Panc1 (cell line): ENCODE measurements at regions of chr12 and their contacts with region 1.

Region 1: DNA sequence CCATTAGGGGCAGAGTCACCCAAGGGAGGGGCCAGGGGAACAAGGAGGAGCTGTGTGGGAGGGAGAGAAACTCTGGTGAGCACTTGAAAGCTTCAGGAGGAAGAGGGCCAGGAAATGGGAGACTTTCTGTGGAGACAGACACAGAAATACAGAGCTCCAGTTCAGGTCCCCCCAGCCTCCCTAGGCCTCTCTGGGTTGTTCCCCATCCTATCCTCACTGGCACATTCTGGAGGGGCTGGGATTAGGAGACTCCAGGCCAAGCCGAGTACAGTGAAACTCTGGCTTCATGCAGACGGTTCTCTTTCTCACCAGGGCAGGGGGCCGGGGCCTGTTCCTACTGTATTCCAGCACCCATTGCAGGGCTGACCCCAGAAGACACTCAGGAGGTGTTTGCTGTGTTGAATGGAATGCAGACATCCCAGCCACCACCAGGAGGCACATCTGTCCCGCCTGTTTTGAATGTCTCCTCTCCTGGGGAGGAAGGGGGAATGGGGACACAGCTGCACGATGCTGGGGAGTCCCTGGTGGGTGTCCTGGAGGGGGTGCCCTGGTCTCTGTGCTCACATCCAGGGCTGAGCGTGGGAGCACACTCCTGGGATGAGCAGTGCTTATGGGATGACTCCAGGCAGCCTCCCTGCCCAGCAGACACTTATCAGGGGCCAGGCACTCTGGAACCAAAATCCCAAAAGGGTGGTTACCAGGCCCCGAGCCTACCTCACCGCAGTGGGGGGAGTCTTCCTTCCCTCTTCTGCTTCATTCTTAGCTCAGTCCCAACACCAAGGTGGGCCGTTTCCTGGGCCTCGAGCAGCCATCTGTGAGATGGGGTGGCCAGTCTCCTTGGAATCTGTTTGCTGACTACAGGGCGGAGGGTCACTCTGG is 5.5 kb upstream of the KRT84 start:
- DNase-seq: no peak
- ATAC-seq: peak; percentile 80
- H3K4me3 ChIP-seq: no peak overlapping the region
- H3K27ac ChIP-seq: no peak overlapping the region
- H3K4me1 ChIP-seq: no peaks in the 10 kb centered on the region
- H3K27me3 ChIP-seq: peaks cover 11% of the 10 kb centered on the region
- CTCF ChIP-seq: peak; percentile 84

Region 2: DNA sequence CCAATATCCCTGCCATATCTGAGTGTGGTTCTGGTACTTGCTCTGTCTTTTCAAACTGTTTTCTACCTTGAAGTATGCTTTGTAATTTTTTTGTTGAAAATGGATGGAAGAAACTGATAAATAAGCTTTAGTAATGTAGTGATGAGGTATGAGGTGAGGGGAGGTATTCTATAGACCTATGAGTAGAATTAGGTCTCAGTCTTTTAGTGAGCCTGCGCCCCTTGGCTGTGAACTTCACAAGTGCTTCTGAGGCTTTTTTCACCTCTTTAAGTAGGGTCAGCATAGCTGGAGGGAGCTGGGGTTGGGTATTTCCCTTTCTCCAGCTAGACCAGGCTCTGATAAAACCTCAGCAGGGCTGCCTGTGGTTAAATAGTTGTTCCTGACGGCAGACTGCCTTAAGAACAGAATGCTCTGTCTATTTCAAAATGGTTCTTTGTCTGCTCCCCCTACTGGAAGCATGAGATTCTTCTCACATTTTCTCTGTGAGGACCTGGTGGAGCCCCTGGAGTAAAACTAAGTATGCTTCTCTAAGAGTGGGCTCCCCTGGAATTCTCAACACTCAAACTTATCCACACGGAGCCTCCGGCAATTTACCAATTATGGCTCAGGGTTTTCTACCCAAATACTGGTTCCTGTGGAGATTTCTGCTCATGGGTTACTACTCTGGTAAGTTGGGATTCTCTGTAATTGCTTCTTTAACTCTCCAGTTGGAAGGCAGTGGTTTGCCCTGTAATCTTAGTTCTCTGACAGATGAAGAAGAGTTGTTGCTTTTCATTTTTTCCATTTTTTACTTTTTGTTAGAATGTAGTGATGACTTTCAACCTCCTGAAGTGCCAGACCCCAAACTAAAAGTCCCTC is 116.1 kb after region 1 on chr12:
- CTCF ChIA-PET with region 1: no interaction called
- POLR2A ChIA-PET with region 1: no interaction called
- in situ Hi-C with region 1: no loop called
- intact Hi-C with region 1: loop called (anchors 5 kb)
- DNase-seq: peak; percentile 20
- ATAC-seq: peak; percentile 85
- H3K4me3 ChIP-seq: no peak overlapping the region
- H3K27ac ChIP-seq: no peak overlapping the region
- H3K4me1 ChIP-seq: no peaks in the 10 kb centered on the region
- H3K27me3 ChIP-seq: peaks cover 8% of the 10 kb centered on the region
- CTCF ChIP-seq: peak; percentile 79

Region 3: GRCh38 chr12:52615208-52615868 is 224.4 kb after region 1 on chr12:
- CTCF ChIA-PET with region 1: no interaction called
- POLR2A ChIA-PET with region 1: no interaction called
- in situ Hi-C with region 1: no loop called
- intact Hi-C with region 1: no loop called
- DNase-seq: no peak
- ATAC-seq: no peak
- H3K4me3 ChIP-seq: no peak overlapping the region
- H3K27ac ChIP-seq: no peak overlapping the region
- H3K4me1 ChIP-seq: no peaks in the 10 kb centered on the region
- H3K27me3 ChIP-seq: peaks cover 8% of the 10 kb centered on the region
- CTCF ChIP-seq: no peak

Region 4: GRCh38 chr12:52884526-52885293 is 493.7 kb after region 1 on chr12:
- CTCF ChIA-PET with region 1: no interaction called
- POLR2A ChIA-PET with region 1: no interaction called
- in situ Hi-C with region 1: no loop called
- intact Hi-C with region 1: no loop called
- DNase-seq: no peak
- ATAC-seq: peak; percentile 86
- H3K4me3 ChIP-seq: no peak overlapping the region
- H3K27ac ChIP-seq: peak overlapping the region; percentile 83
- H3K4me1 ChIP-seq: peaks cover 17% of the 10 kb centered on the region
- H3K27me3 ChIP-seq: no peaks in the 10 kb centered on the region
- CTCF ChIP-seq: peak; percentile 94